T-cell (primary cell): ENCODE measurements at regions of chr3 and their contacts with region 1.

Region 1: GRCh38 chr3:49769286-49769915 is 16.9 kb downstream of the IP6K1 start:
- DNase-seq: no peak
- ATAC-seq: no peak
- H3K4me3 ChIP-seq: no peak overlapping the region
- H3K4me3 Mint-ChIP-seq: no peak overlapping the region
- H3K27ac ChIP-seq: no peak overlapping the region
- H3K27ac Mint-ChIP-seq: no peak overlapping the region
- H3K4me1 ChIP-seq: peaks cover 0 to 3% of the 10 kb centered on the region in 2 experiments
- H3K4me1 Mint-ChIP-seq: peaks cover 16 to 45% (median 42%) of the 10 kb centered on the region in 3 donors
- H3K27me3 ChIP-seq: no peaks in the 10 kb centered on the region
- H3K27me3 Mint-ChIP-seq: no peaks in the 10 kb centered on the region

Region 2: DNA sequence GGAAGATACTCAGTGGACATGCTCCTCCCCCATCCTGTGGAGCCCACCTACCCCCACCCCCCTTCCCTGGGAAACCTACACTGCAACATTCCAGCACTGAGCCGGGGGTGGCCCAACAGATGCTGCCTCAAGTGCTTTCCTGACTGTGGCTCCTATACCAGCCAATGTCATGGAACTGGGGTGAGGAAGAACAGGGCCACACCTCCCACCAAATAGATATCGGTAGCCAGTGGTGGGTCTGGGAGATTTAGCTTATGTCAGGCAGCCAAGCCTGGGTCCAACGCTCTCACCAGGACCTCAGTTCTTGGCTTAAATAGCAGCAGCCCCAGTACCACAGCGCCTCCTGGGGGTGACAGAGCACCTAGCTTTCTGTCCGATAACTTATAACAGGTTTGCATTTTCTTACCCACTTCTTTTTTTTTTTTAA is 1611.4 kb before region 1 on chr3:
- CTCF ChIA-PET with region 1: interaction called in 1 of 2 experiments, 12 read pairs
- POLR2A ChIA-PET with region 1: no interaction called
- DNase-seq: peak in 25 of 35 experiments; percentile 8 to 58 (median 31)
- ATAC-seq: peak in 1 of 4 experiments; percentile 29
- H3K4me3 ChIP-seq: no peak overlapping the region
- H3K4me3 Mint-ChIP-seq: no peak overlapping the region
- H3K27ac ChIP-seq: no peak overlapping the region
- H3K27ac Mint-ChIP-seq: no peak overlapping the region
- H3K4me1 ChIP-seq: no peaks in the 10 kb centered on the region
- H3K4me1 Mint-ChIP-seq: no peaks in the 10 kb centered on the region
- H3K27me3 ChIP-seq: no peaks in the 10 kb centered on the region
- H3K27me3 Mint-ChIP-seq: no peaks in the 10 kb centered on the region

Region 3: DNA sequence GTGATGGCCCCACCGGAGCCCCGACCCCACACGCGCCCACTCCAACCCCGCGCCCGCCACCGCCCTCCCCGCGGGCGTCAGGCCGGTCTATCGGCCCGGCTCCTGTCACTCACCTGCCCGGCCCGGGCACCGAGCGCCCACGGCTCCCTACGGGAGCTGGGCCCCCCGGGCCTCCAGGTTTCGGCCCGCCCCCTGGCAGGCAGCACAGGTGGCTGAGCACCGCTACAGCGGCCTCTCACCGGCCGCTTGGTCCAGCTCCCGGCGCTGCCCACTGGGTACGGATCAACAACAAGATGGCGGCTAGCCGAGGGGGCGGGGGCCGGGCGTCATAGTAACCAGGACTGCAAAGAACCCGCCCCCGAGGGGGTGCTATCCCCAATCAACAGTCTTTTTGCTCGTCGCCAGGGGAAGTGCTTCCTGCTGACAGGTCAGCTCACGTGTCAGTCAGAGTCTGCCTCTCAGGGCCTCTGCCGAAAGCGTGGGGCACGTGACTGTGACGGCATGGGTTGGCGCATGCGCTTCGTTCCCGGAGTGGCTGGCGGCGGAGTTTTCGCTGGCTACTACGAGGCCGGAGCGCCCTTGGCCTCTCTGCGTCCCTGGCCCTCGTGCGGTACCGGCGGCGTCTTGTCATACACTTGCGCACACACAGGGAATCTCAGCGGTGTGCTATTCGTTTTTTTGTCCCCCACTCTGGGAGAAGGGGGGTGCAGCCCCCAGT is 17.0 kb after region 1 on chr3 and contains the start of gene IP6K1:
- CTCF ChIA-PET with region 1: interaction called in 1 of 2 experiments, 14 read pairs
- POLR2A ChIA-PET with region 1: no interaction called
- DNase-seq: peak; percentile 97 to 100 (median 100)
- ATAC-seq: peak; percentile 99 to 100 (median 100)
- H3K4me3 ChIP-seq: peak within 1 kb of the TSS; percentile 60 to 72
- H3K4me3 Mint-ChIP-seq: peak within 1 kb of the TSS; percentile 90 to 93 (median 91)
- H3K27ac ChIP-seq: peak within 1 kb of the TSS; percentile 93
- H3K27ac Mint-ChIP-seq: peak within 1 kb of the TSS; percentile 94 to 98
- H3K4me1 ChIP-seq: peaks cover 11 to 61% of the 10 kb centered on the region in 2 experiments
- H3K4me1 Mint-ChIP-seq: peaks cover 32 to 40% (median 34%) of the 10 kb centered on the region in 3 donors
- H3K27me3 ChIP-seq: peaks cover 0 to 7% of the 10 kb centered on the region in 2 experiments
- H3K27me3 Mint-ChIP-seq: no peaks in the 10 kb centered on the region
- total RNA-seq, gene IP6K1: 31.6 to 62.2 (median 57.0) TPM

Region 4: GRCh38 chr3:50044976-50045375 is 275.6 kb after region 1 on chr3:
- CTCF ChIA-PET with region 1: no interaction called
- POLR2A ChIA-PET with region 1: interaction called in 1 of 2 experiments, 14 read pairs
- DNase-seq: no peak
- ATAC-seq: no peak
- H3K4me3 ChIP-seq: no peak overlapping the region
- H3K4me3 Mint-ChIP-seq: no peak overlapping the region
- H3K27ac ChIP-seq: no peak overlapping the region
- H3K27ac Mint-ChIP-seq: peak overlapping the region in 1 of 2 donors; percentile 19
- H3K4me1 ChIP-seq: no peaks in the 10 kb centered on the region
- H3K4me1 Mint-ChIP-seq: peaks cover 11 to 16% (median 14%) of the 10 kb centered on the region in 3 donors
- H3K27me3 ChIP-seq: no peaks in the 10 kb centered on the region
- H3K27me3 Mint-ChIP-seq: no peaks in the 10 kb centered on the region